ENCODE measurements at regions of chr3 and their contacts with region 1.

Region 1: GRCh38 chr3:71006810-71007785 is 576.4 kb downstream of the FOXP1 start:
- DNase-seq: no peak
- ATAC-seq: peak; percentile 48; the same call in 2 of the 3 replicates
- H3K4me3 ChIP-seq: no peak overlapping the region
- H3K27ac ChIP-seq: no peak overlapping the region
- H3K4me1 ChIP-seq: peaks cover 3% of the 10 kb centered on the region; the same call in 1 of the 2 replicates
- H3K27me3 ChIP-seq: no peaks in the 10 kb centered on the region
- CTCF ChIP-seq: peak; percentile 47 to 56 (median 47); a peak in 5 of 6 replicates
- EP300 ChIP-seq: no peak
- POLR2A ChIP-seq: no peak
- RAD21 ChIP-seq: peak; percentile 85

Region 2: DNA sequence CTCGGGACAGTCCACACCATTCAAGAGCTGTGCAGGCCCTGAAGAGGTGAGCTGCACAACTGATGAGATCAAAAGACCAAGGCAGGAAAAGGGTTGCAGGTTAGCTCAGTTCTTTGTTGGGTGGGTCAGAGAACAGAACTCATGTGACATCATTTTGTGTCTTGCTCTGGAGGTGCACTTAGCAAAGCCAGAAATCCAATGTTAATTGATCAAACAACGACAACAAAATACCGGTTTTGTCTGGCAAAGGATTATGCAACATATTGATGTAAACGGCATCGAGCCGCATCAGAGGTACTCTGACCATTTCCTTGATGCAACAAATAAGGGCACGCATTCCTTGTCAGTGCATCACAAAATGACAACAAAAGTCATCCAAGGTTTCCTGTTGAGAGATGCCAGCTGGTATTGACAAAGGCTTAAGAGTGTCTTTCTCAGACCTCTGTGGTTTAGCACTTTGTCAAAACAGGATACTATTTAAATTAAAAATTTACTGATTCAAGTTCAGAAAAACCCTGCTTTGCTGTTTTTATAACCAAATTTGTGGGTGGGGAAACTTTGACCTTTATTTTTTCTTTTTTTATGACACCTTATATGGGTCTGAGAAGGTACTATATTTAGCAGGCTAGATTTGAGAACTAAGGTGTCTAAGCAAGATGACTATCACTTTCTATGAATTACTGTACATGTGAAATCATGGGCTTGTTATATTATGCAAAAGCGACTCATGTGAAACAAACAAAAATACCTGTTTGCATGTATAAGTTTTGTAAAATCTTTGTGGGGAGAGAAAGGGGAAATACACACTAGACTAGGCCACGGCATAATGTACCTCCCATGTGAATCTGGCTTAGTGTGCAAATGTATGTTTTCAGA is 80.3 kb after region 1 on chr3:
- CTCF ChIA-PET with region 1: interaction called, 4 read pairs
- POLR2A ChIA-PET with region 1: no interaction called
- RAD21 ChIA-PET with region 1: no interaction called
- SMC1A ChIA-PET with region 1: no interaction called
- in situ Hi-C with region 1: no loop called
- intact Hi-C with region 1: loop called (anchors 1 kb)
- DNase-seq: peak; percentile 80
- ATAC-seq: peak; percentile 88
- H3K4me3 ChIP-seq: no peak overlapping the region
- H3K27ac ChIP-seq: peak overlapping the region; percentile 81
- H3K4me1 ChIP-seq: peaks cover 34% of the 10 kb centered on the region
- H3K27me3 ChIP-seq: no peaks in the 10 kb centered on the region
- CTCF ChIP-seq: no peak
- EP300 ChIP-seq: peak; percentile 6 to 80; a peak in 3 of 4 replicates
- POLR2A ChIP-seq: no peak
- RAD21 ChIP-seq: peak; percentile 9; the same call in 1 of the 2 replicates

Region 3: GRCh38 chr3:71226565-71227269 is 219.6 kb after region 1 on chr3:
- CTCF ChIA-PET with region 1: interaction called, 3 read pairs
- POLR2A ChIA-PET with region 1: no interaction called
- RAD21 ChIA-PET with region 1: interaction called, 3 read pairs
- SMC1A ChIA-PET with region 1: no interaction called
- in situ Hi-C with region 1: no loop called
- intact Hi-C with region 1: loop called (anchors 5 kb)
- DNase-seq: peak; percentile 28
- ATAC-seq: peak; percentile 95
- H3K4me3 ChIP-seq: peak overlapping the region; percentile 52
- H3K27ac ChIP-seq: no peak overlapping the region
- H3K4me1 ChIP-seq: peaks cover 14% of the 10 kb centered on the region
- H3K27me3 ChIP-seq: peaks cover 2 to 7% of the 10 kb centered on the region in 2 experiments; a peak in 2 of 4 replicates
- CTCF ChIP-seq: no peak
- EP300 ChIP-seq: peak; percentile 53 to 63; a peak in 2 of 4 replicates
- POLR2A ChIP-seq: no peak
- RAD21 ChIP-seq: no peak

Region 4: GRCh38 chr3:71397046-71397445 is 389.9 kb after region 1 on chr3:
- CTCF ChIA-PET with region 1: interaction called, 11 read pairs
- POLR2A ChIA-PET with region 1: no interaction called
- RAD21 ChIA-PET with region 1: no interaction called
- SMC1A ChIA-PET with region 1: interaction called, 3 read pairs
- in situ Hi-C with region 1: no loop called
- intact Hi-C with region 1: loop called (anchors 5 kb)
- DNase-seq: no peak
- ATAC-seq: no peak
- H3K4me3 ChIP-seq: no peak overlapping the region
- H3K27ac ChIP-seq: no peak overlapping the region
- H3K4me1 ChIP-seq: peaks cover 13% of the 10 kb centered on the region
- H3K27me3 ChIP-seq: peaks cover 0 to 4% of the 10 kb centered on the region in 2 experiments; a peak in 2 of 4 replicates
- CTCF ChIP-seq: peak; percentile 27 to 63 (median 46); a peak in 4 of 6 replicates
- EP300 ChIP-seq: no peak
- POLR2A ChIP-seq: no peak
- RAD21 ChIP-seq: peak; percentile 39; the same call in 1 of the 2 replicates

Region 5: DNA sequence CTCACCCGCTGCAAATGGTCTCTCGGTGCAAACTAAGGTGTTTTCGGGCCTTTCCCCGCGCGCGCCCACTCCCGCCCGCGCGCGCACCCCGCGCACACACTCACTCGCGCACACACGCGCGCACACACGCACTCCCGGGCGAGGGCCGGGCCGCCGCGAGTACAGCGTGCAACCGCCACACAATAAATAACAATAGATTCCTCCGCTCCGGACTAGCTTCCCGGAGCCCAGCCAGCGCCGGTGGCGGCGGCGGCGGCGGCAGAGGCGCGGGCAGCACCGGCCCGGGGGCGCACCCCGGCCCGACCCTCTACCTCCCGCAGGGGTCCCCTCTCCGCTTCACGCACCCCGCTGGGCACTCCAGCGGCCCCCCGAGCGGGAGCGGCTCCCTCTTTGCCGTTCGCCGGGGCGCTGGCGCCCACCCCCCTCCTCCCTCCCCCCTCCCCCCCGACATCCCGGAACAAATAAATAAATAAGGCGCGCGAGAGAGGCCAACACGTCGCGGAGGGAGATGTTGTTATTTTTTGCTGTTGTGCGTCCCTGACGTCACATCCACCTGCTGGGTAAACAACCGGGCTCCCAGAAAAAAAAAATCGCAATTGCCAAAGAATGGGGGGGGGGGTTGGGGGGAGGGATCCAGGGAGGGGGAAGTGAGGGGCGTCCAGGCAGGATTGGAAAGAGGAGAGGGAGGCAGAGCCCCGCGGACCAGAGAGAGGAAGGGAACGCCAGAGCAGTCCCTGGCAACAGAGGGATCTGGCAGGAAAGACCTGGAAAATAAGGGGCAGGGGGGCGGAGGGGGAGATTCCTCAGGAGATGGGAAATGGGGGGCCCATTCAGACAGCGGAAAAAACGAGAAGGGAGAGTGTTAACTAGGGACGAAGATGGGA is 576.7 kb after region 1 on chr3 and contains the start of gene FOXP1:
- CTCF ChIA-PET with region 1: interaction called, 30 read pairs
- POLR2A ChIA-PET with region 1: no interaction called
- RAD21 ChIA-PET with region 1: interaction called, 4 read pairs
- SMC1A ChIA-PET with region 1: interaction called, 4 read pairs
- in situ Hi-C with region 1: no loop called
- intact Hi-C with region 1: loop called (anchors 1 kb)
- DNase-seq: no peak
- ATAC-seq: peak; percentile 67
- H3K4me3 ChIP-seq: peak within 1 kb of the TSS; percentile 67
- H3K27ac ChIP-seq: no peak within 1 kb of the TSS
- H3K4me1 ChIP-seq: peaks cover 9% of the 10 kb centered on the region
- H3K27me3 ChIP-seq: peaks cover 12 to 35% of the 10 kb centered on the region in 2 experiments
- CTCF ChIP-seq: no peak
- EP300 ChIP-seq: no peak
- POLR2A ChIP-seq: no peak
- RAD21 ChIP-seq: no peak
- polyA plus RNA-seq, gene FOXP1: 0.13 to 0.14 TPM

Region 6: GRCh38 chr3:71652781-71653413 is 645.8 kb after region 1 on chr3:
- CTCF ChIA-PET with region 1: interaction called, 4 read pairs
- POLR2A ChIA-PET with region 1: no interaction called
- RAD21 ChIA-PET with region 1: interaction called, 4 read pairs
- SMC1A ChIA-PET with region 1: interaction called, 3 read pairs
- in situ Hi-C with region 1: no loop called
- intact Hi-C with region 1: loop called (anchors 2 kb)
- DNase-seq: peak; percentile 4
- ATAC-seq: peak; percentile 71
- H3K4me3 ChIP-seq: no peak overlapping the region
- H3K27ac ChIP-seq: no peak overlapping the region
- H3K4me1 ChIP-seq: no peaks in the 10 kb centered on the region
- H3K27me3 ChIP-seq: peaks cover 0 to 2% of the 10 kb centered on the region in 2 experiments; a peak in 1 of 4 replicates
- CTCF ChIP-seq: peak in 1 of 3 experiments; percentile 56; a peak in 4 of 6 replicates
- EP300 ChIP-seq: no peak
- POLR2A ChIP-seq: no peak
- RAD21 ChIP-seq: peak; percentile 62

Measured in GM12878 (cell line).